Activated CD4-positive, alpha-beta memory T cell treated with anti-CD3 and anti-CD28 coated beads for 36 hours (primary cell): ENCODE measurements at regions of chr11 and their contacts with region 1.

Region 1: DNA sequence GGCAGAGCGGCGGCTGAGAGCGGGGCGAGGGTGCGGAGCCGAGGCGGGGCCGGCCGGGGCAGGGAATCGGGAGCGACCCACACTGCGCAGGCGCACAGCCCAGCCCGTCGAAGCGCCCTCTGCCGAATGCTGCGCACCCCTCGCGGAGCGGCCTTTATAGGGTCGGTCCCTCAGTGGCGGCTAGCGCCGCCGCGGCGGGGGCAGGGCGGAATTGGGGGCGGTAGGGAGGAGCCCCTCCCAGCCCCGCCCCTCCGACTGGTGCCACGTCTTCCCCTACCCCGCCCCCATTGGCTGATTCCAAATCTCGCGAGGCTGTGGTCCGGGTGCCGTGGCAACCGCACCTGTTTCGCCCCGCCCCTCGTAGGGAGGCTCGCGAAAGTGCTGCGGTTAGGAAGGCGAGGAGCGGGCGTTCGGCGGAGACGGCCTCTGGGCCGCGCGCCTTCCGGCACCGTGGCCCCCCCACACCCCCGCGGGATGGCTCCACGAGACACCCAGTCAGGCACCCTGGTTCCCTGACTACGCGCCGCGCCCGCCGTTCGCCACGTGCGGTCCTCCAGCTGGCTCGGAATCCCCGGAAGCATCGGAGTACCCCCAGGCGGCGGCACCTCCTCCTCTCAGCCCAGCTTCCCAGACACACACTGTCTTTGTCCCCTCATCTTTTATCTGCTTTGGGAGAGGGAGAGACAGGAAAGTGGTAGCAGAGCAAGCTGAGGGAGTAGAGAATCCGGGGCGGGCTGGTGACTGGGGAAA is at the start of gene EHD1:
- DNase-seq: peak; percentile 99
- H3K4me3 Mint-ChIP-seq: peak within 1 kb of the TSS; percentile 99
- H3K27ac Mint-ChIP-seq: peak within 1 kb of the TSS; percentile 98
- H3K4me1 Mint-ChIP-seq: peaks cover 53% of the 10 kb centered on the region
- H3K27me3 Mint-ChIP-seq: no peaks in the 10 kb centered on the region
- total RNA-seq, gene EHD1: 103 to 113 TPM

Region 2: DNA sequence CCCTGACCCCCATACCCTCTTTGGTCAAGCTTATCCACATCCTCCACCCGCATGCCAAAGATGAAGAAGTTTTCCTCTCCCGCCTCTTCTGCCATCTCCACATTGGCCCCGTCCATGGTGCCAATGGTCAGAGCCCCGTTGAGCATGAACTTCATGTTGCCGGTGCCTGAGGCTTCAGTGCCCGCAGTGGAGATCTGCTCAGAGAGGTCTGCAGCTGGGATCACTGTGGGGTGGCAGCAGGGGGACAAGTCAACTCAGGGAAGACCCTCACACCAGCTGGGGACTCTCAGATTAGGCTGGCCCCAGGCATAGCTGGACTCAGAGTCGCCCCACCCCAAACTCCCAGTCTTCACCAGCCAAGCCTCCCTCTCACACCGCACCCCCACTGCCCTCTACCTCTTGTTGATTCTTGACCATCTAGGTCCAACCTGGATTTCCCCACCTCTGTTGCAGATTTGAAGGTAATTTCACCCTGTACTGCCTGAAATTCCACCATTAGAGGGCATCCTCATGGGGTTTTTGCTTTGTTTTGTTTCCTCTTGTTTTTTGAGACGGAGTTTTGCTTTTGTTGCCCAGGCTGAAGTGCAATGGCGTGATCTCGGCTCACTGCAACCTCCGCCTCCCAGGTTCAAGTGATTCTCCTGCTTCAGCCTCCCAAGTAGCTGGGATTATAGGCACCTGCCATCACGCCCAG is 128.2 kb before region 1 on chr11:
- CTCF ChIA-PET with region 1: no interaction called
- POLR2A ChIA-PET with region 1: no interaction called
- intact Hi-C with region 1: no loop called
- DNase-seq: no peak
- H3K4me3 Mint-ChIP-seq: no peak overlapping the region
- H3K27ac Mint-ChIP-seq: no peak overlapping the region
- H3K4me1 Mint-ChIP-seq: peaks cover 8% of the 10 kb centered on the region
- H3K27me3 Mint-ChIP-seq: no peaks in the 10 kb centered on the region

Region 3: DNA sequence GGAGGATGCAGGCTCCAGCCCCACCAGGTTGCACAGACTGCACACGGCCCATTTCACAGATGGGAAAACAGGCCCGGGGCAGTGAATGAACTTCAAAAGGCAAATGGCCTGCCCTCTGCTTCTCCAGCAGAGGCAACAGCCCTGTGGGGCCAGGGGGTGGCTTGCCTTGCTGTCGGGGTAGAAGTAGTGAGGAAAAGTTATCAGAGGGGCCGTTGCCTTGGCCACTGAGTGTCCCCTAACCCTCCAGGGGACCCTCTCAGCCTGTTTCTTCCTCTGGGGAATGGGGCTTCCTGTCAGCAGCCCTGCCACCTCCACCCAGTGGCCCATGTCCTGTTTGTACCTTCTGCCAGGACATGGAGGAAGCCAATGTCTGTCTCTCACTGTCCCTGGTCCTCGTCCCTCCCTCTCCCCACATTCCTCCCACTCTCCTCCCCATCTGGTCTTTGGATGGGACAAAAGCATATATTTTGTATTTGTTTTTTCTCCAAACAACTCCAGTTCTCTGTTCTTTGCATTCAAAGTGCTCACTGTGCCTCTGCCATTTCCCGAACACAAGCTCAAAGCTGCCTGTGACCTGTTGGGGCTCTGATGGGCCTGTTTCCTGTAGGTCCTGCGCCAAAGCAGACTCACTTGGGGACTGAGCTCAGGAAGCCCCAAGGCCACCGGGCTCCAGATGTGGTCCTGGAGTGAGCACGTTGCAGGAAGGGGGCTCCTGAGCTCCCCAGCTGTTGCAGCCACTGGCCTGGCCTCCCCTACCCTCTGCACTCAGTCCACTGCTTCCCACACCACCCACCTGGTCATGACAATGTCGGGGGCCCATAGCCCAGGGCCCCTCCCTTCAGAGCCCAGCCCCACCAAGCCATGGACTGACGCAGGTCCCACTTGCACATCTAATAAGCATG is 85.1 kb before region 1 on chr11:
- CTCF ChIA-PET with region 1: no interaction called
- POLR2A ChIA-PET with region 1: no interaction called
- intact Hi-C with region 1: no loop called
- DNase-seq: no peak
- H3K4me3 Mint-ChIP-seq: no peak overlapping the region
- H3K27ac Mint-ChIP-seq: peak overlapping the region; percentile 40
- H3K4me1 Mint-ChIP-seq: peaks cover 7% of the 10 kb centered on the region
- H3K27me3 Mint-ChIP-seq: no peaks in the 10 kb centered on the region

Region 4: GRCh38 chr11:64826578-64827450 is 51.9 kb before region 1 on chr11:
- CTCF ChIA-PET with region 1: no interaction called
- POLR2A ChIA-PET with region 1: no interaction called
- intact Hi-C with region 1: no loop called
- DNase-seq: no peak
- H3K4me3 Mint-ChIP-seq: no peak overlapping the region
- H3K27ac Mint-ChIP-seq: no peak overlapping the region
- H3K4me1 Mint-ChIP-seq: no peaks in the 10 kb centered on the region
- H3K27me3 Mint-ChIP-seq: no peaks in the 10 kb centered on the region

Region 5: DNA sequence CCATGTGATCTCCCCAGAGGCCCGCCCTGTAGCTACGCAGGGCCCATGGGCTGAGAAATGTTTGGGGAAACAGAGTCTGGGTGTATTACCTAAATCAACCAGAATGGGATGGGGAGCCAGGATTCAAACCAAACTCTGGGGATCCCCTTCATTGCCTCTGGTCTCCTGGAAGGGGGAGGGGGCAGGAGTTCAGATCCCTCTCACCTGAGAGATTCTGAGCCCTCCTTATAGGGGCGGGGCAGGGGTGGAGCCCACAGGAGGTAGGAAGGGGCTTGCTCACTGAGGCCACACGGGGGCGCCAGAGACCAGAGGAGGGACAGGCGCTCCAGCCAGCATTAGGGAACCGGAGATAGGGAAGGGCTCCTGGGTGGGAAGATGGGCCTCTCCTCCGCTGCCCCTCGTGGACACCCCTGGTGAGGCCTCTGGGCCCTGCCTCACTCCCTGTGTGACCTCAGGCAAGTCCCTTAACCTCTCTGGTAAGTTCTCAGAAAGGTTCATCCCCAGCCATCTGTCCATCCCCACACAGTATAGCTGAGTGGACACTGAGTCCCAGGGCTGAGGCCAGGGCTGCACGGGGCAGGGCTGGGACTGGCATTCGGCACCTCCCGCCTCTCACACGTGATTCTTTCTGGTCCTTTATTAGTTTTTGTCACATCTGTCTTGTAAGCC is 31.5 kb before region 1 on chr11:
- CTCF ChIA-PET with region 1: interaction called, 1,198 read pairs
- POLR2A ChIA-PET with region 1: interaction called, 460 read pairs
- intact Hi-C with region 1: no loop called
- DNase-seq: peak; percentile 94
- H3K4me3 Mint-ChIP-seq: no peak overlapping the region
- H3K27ac Mint-ChIP-seq: peak overlapping the region; percentile 18
- H3K4me1 Mint-ChIP-seq: peaks cover 48% of the 10 kb centered on the region
- H3K27me3 Mint-ChIP-seq: no peaks in the 10 kb centered on the region

Region 6: DNA sequence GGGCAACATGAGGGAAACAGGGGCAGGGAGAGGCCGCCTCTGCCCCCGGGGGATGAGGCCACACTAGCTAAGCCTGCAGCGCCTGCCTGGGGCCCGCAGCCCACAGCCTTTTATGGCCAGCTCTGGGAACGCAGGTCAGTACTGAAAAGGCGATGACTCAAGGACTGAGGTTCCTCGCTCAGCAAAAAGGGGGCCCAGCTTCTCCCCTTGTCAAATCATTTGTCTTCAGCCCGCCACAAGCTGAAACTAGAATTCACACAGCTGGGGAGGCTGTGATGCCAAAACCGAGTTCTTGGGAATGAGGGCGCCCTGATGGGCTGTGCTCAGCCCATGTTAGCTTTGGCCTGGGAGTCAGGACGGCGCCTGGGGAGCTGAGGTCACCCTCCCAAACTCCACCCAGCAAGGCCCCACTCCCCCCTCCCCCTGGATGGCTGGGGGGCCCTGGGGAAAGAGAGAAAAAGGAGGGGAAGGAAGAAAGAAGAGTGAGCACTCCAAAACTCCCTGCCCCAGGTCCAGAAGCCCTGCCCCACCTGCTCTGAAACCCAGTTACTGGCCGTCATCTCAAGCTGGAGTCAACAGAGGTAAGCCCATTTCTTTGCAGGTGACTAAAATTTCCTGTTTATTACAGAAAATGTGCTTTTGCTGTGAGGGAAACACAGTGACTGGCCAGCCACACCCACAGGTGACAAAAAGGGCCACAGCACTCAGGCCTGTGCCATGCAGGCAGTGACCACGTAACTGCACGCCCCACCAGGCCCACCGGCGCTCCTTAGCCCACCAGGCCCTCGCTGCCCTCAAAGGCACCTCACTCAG is 14.0 kb before region 1 on chr11:
- CTCF ChIA-PET with region 1: interaction called, 1,198 read pairs
- POLR2A ChIA-PET with region 1: interaction called, 460 read pairs
- intact Hi-C with region 1: loop called (anchors 1 kb)
- DNase-seq: peak; percentile 90
- H3K4me3 Mint-ChIP-seq: peak overlapping the region; percentile 67
- H3K27ac Mint-ChIP-seq: peak overlapping the region; percentile 96
- H3K4me1 Mint-ChIP-seq: peaks cover 93% of the 10 kb centered on the region
- H3K27me3 Mint-ChIP-seq: no peaks in the 10 kb centered on the region

Region 7: GRCh38 chr11:64916775-64917662 is 38.4 kb after region 1 on chr11 and contains the start of gene ATG2A:
- CTCF ChIA-PET with region 1: no interaction called
- POLR2A ChIA-PET with region 1: no interaction called
- intact Hi-C with region 1: loop called (anchors 2 kb)
- DNase-seq: peak; percentile 99
- H3K4me3 Mint-ChIP-seq: peak within 1 kb of the TSS; percentile 94
- H3K27ac Mint-ChIP-seq: peak within 1 kb of the TSS; percentile 86
- H3K4me1 Mint-ChIP-seq: peaks cover 26% of the 10 kb centered on the region
- H3K27me3 Mint-ChIP-seq: no peaks in the 10 kb centered on the region
- total RNA-seq, gene ATG2A: 20.2 to 20.5 TPM

Region 8: DNA sequence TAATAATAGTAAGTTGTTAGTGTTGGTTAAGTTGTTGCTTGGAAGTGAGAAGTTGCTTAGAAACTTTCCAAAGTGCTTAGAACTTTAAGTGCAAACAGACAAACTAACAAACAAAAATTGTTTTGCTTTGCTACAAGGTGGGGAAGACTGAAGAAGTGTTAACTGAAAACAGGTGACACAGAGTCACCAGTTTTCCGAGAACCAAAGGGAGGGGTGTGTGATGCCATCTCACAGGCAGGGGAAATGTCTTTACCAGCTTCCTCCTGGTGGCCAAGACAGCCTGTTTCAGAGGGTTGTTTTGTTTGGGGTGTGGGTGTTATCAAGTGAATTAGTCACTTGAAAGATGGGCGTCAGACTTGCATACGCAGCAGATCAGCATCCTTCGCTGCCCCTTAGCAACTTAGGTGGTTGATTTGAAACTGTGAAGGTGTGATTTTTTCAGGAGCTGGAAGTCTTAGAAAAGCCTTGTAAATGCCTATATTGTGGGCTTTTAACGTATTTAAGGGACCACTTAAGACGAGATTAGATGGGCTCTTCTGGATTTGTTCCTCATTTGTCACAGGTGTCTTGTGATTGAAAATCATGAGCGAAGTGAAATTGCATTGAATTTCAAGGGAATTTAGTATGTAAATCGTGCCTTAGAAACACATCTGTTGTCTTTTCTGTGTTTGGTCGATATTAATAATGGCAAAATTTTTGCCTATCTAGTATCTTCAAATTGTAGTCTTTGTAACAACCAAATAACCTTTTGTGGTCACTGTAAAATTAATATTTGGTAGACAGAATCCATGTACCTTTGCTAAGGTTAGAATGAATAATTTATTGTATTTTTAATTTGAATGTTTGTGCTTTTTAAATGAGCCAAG is 546.7 kb after region 1 on chr11:
- CTCF ChIA-PET with region 1: no interaction called
- POLR2A ChIA-PET with region 1: no interaction called
- intact Hi-C with region 1: loop called (anchors 5 kb)
- DNase-seq: peak; percentile 91
- H3K4me3 Mint-ChIP-seq: peak overlapping the region; percentile 97
- H3K27ac Mint-ChIP-seq: peak overlapping the region; percentile 100
- H3K4me1 Mint-ChIP-seq: peaks cover 56% of the 10 kb centered on the region
- H3K27me3 Mint-ChIP-seq: peaks cover 24% of the 10 kb centered on the region

Region 9: GRCh38 chr11:65773784-65774411 is 895.2 kb after region 1 on chr11:
- CTCF ChIA-PET with region 1: no interaction called
- POLR2A ChIA-PET with region 1: no interaction called
- intact Hi-C with region 1: no loop called
- DNase-seq: no peak
- H3K4me3 Mint-ChIP-seq: no peak overlapping the region
- H3K27ac Mint-ChIP-seq: no peak overlapping the region
- H3K4me1 Mint-ChIP-seq: peaks cover 15% of the 10 kb centered on the region
- H3K27me3 Mint-ChIP-seq: no peaks in the 10 kb centered on the region